IMR-90 (cell line): ENCODE measurements at regions of chr22 and their contacts with region 1.

Region 1: GRCh38 chr22:31160328-31160978 is 471 bp downstream of the RNF185 start:
- DNase-seq: peak; percentile 31
- ATAC-seq: peak; percentile 70
- H3K4me3 ChIP-seq: peak overlapping the region; percentile 90
- H3K27ac ChIP-seq: peak overlapping the region; percentile 89
- H3K4me1 ChIP-seq: peaks cover 17% of the 10 kb centered on the region
- H3K27me3 ChIP-seq: no peaks in the 10 kb centered on the region
- CTCF ChIP-seq: no peak
- POLR2A ChIP-seq: no peak
- RAD21 ChIP-seq: no peak

Region 2: GRCh38 chr22:30816413-30816812 is 344.0 kb before region 1 on chr22:
- CTCF ChIA-PET with region 1: no interaction called
- POLR2A ChIA-PET with region 1: no interaction called
- dilution Hi-C with region 1: no loop called
- in situ Hi-C with region 1: no loop called
- intact Hi-C with region 1: no loop called
- DNase-seq: no peak
- ATAC-seq: no peak
- H3K4me3 ChIP-seq: no peak overlapping the region
- H3K27ac ChIP-seq: no peak overlapping the region
- H3K4me1 ChIP-seq: no peaks in the 10 kb centered on the region
- H3K27me3 ChIP-seq: peaks cover 18% of the 10 kb centered on the region
- CTCF ChIP-seq: no peak
- POLR2A ChIP-seq: no peak
- RAD21 ChIP-seq: no peak

Region 3: DNA sequence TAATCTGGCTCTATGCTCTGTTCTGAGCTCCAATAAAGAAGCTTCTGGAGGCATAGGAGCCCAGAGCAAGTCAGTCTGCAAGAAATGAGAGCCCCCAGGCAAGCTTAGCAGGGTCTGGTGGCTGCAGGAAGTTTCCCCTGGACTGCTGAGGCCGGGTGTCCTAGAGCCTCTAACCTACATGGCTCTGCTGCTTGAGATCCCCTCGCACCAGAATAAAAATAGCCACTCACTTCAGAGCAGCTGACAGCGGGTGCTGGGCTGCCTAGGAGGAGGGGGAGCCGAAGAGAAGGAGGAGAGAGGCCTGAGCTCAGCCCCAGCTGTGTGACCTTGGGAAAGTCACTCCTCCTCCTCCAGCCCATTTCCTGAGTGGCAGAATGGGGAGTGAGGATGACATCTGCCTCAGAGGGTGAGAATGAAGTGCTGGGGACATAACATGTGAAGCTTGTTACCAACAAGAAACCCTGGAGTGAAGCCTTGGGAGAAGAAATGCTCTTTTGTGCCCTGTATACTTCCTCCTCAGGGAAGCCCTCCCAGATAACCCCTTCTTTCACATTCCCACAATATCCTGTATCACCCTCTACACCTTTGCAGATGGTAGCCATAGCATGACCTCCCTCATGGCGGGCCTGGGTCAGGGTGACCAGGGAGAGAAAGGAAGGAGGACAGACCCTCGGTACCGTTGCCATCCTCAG is 41.3 kb before region 1 on chr22:
- CTCF ChIA-PET with region 1: no interaction called
- POLR2A ChIA-PET with region 1: no interaction called
- dilution Hi-C with region 1: no loop called
- in situ Hi-C with region 1: no loop called
- intact Hi-C with region 1: no loop called
- DNase-seq: no peak
- ATAC-seq: no peak
- H3K4me3 ChIP-seq: no peak overlapping the region
- H3K27ac ChIP-seq: no peak overlapping the region
- H3K4me1 ChIP-seq: peaks cover 5% of the 10 kb centered on the region
- H3K27me3 ChIP-seq: no peaks in the 10 kb centered on the region
- CTCF ChIP-seq: no peak
- POLR2A ChIP-seq: no peak
- RAD21 ChIP-seq: no peak

Region 4: DNA sequence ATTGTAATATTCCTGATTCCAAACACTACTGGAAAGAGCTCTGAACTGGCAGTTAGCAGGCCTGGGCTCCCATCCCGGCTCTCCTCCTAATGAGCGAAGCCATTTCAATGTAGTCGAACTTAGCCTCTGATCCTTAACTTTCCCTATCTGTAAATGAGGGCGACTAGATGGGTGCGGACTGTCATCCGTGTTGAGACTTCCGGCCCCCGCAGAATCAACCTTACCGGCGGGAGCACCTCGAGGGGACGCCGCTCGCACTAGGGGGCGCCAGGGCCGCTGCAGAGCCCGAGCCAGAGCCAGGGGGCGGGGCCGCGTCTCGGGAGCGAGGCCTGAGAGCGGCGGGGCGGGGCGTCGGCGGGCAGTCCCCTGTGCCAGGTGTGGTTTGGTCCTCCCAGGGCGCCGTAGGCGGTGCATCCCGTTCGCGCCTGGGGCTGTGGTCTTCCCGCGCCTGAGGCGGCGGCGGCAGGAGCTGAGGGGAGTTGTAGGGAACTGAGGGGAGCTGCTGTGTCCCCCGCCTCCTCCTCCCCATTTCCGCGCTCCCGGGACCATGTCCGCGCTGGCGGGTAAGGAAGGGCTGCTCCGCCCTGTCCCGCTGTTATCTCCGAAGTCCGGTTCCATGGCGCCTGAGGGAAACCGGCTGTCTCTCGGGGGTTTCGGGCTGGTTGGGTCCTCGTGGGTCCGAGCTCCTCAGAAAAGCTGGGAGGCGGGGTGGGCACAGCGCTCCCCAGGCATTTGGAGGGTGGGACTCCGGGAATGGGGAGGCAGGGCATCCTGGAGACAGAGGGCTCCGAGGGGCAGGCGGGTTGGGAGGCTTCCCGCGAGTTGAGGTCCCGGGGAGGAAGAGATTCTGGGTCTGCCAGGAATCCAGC is 51.6 kb after region 1 on chr22 and contains the start of gene LIMK2:
- CTCF ChIA-PET with region 1: interaction called, 10 read pairs
- POLR2A ChIA-PET with region 1: no interaction called
- dilution Hi-C with region 1: no loop called
- in situ Hi-C with region 1: no loop called
- intact Hi-C with region 1: no loop called
- DNase-seq: peak; percentile 73
- ATAC-seq: peak; percentile 99
- H3K4me3 ChIP-seq: peak within 1 kb of the TSS; percentile 80
- H3K27ac ChIP-seq: peak within 1 kb of the TSS; percentile 30
- H3K4me1 ChIP-seq: peaks cover 4% of the 10 kb centered on the region; the same call in 1 of the 2 replicates
- H3K27me3 ChIP-seq: no peaks in the 10 kb centered on the region
- CTCF ChIP-seq: peak; percentile 92
- POLR2A ChIP-seq: no peak
- RAD21 ChIP-seq: peak; percentile 70
- total RNA-seq, gene LIMK2: 25.0 and 31.9 TPM in 2 replicates